PC-9 (cell line): ENCODE measurements at regions of chr2 and their contacts with region 1.

Region 1: GRCh38 chr2:222561817-222562645 is 93.9 kb downstream of the FARSB start:
- DNase-seq: peak; percentile 59 to 68
- H3K4me3 ChIP-seq: no peak overlapping the region
- H3K27ac ChIP-seq: no peak overlapping the region
- H3K4me1 ChIP-seq: no peaks in the 10 kb centered on the region
- H3K27me3 ChIP-seq: no peaks in the 10 kb centered on the region
- CTCF ChIP-seq: peak; percentile 91

Region 2: GRCh38 chr2:222038067-222038802 is 523.8 kb before region 1 on chr2:
- CTCF ChIA-PET with region 1: interaction called, 5 read pairs
- POLR2A ChIA-PET with region 1: no interaction called
- intact Hi-C with region 1: loop called (anchors 1 kb)
- DNase-seq: no peak
- H3K4me3 ChIP-seq: no peak overlapping the region
- H3K27ac ChIP-seq: no peak overlapping the region
- H3K4me1 ChIP-seq: peaks cover 12% of the 10 kb centered on the region
- H3K27me3 ChIP-seq: no peaks in the 10 kb centered on the region
- CTCF ChIP-seq: peak; percentile 91

Region 3: DNA sequence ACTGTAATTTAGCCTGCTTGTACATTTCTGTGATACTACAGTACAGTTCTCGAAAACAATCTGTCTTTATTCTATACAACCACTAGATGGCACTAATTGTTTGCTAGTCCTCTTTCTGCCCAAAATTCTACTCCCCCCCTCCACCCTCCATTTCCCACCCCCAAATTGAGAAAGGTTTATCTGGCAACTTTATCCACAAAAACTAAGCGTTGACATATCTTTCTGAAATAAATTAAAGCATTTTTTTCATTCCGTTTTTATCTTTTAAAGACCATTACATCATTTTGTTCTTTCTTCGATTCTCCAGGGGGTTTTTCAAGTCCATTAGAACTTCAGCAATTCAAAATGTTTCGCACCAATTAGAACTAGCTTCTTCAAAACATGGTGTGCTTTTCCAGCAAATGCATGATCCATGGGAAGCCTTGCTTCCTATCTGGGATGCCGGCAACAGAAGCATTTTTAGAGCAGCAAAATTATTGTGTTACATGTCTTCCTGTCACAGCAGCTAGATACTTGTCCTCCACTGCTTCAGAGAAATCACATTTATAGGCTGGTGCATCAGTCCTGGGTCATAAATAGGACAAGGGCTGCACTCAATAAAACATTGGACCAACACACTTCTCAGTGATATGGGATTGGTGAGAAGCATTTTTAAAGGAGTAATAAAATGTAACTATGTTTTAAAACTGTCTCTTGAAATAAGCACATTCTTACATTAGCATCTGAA is 504.5 kb before region 1 on chr2:
- CTCF ChIA-PET with region 1: interaction called, 17 read pairs
- POLR2A ChIA-PET with region 1: no interaction called
- intact Hi-C with region 1: loop called (anchors 1 kb)
- DNase-seq: no peak
- H3K4me3 ChIP-seq: no peak overlapping the region
- H3K27ac ChIP-seq: no peak overlapping the region
- H3K4me1 ChIP-seq: no peaks in the 10 kb centered on the region
- H3K27me3 ChIP-seq: peaks cover 9% of the 10 kb centered on the region
- CTCF ChIP-seq: peak; percentile 98

Region 4: GRCh38 chr2:222318026-222318711 is 243.9 kb before region 1 on chr2:
- CTCF ChIA-PET with region 1: interaction called, 37 read pairs
- POLR2A ChIA-PET with region 1: no interaction called
- intact Hi-C with region 1: loop called (anchors 1 kb)
- DNase-seq: peak; percentile 74 to 89
- H3K4me3 ChIP-seq: peak overlapping the region; percentile 79
- H3K27ac ChIP-seq: no peak overlapping the region
- H3K4me1 ChIP-seq: peaks cover 5% of the 10 kb centered on the region; the same call in 1 of the 2 replicates
- H3K27me3 ChIP-seq: peaks cover 13% of the 10 kb centered on the region; the same call in 1 of the 2 replicates
- CTCF ChIP-seq: peak; percentile 87

Region 5: DNA sequence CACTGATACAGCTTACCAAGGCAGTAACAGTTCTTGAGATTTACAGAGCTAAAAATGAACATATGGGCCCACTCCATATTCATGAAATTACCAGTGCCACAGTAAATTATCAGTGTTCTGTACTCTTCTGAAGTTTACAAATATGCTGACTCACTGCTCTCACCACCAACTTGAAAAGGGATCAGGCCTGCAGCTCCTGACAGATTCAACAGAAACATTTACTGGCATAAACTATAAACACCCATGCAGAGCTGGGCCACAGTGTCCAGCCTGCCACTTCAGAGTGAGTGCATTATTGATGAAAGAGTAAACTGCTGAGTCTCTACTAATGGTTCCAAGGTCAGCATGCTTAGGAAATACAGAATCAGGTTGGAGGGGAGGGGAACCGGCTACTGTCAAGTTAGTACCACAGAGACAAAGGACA is 10.7 kb after region 1 on chr2:
- CTCF ChIA-PET with region 1: interaction called, 14 read pairs
- POLR2A ChIA-PET with region 1: no interaction called
- intact Hi-C with region 1: no loop called
- DNase-seq: no peak
- H3K4me3 ChIP-seq: peak overlapping the region; percentile 3; the same call in 1 of the 2 replicates
- H3K27ac ChIP-seq: peak overlapping the region; percentile 87
- H3K4me1 ChIP-seq: peaks cover 65% of the 10 kb centered on the region
- H3K27me3 ChIP-seq: no peaks in the 10 kb centered on the region
- CTCF ChIP-seq: no peak

Region 6: GRCh38 chr2:222613715-222614331 is 51.8 kb after region 1 on chr2:
- CTCF ChIA-PET with region 1: no interaction called
- POLR2A ChIA-PET with region 1: no interaction called
- intact Hi-C with region 1: loop called (anchors 2 kb)
- DNase-seq: peak; percentile 25 to 61
- H3K4me3 ChIP-seq: no peak overlapping the region
- H3K27ac ChIP-seq: no peak overlapping the region
- H3K4me1 ChIP-seq: no peaks in the 10 kb centered on the region
- H3K27me3 ChIP-seq: no peaks in the 10 kb centered on the region
- CTCF ChIP-seq: peak; percentile 99

Region 7: GRCh38 chr2:222912117-222912516 is 350.1 kb after region 1 on chr2:
- CTCF ChIA-PET with region 1: interaction called, 11 read pairs
- POLR2A ChIA-PET with region 1: no interaction called
- intact Hi-C with region 1: no loop called
- DNase-seq: no peak
- H3K4me3 ChIP-seq: no peak overlapping the region
- H3K27ac ChIP-seq: peak overlapping the region; percentile 21; the same call in 1 of the 2 replicates
- H3K4me1 ChIP-seq: 0 out of 2 replicates have a peak, but pooled peaks cover 5% of the 10 kb centered on the region
- H3K27me3 ChIP-seq: no peaks in the 10 kb centered on the region
- CTCF ChIP-seq: no peak